Right lobe of liver (tissue), 6 donors: ENCODE measurements at regions of chr6 and their contacts with region 1.

Region 1: GRCh38 chr6:29016559-29017427 is 11.7 kb upstream of the ZNF311 start:
- DNase-seq: peak; percentile 70 to 81 (median 78)
- ATAC-seq: peak; percentile 93 to 98 (median 95)
- H3K4me3 ChIP-seq: peak overlapping the region; percentile 37 to 59 (median 42)
- H3K27ac ChIP-seq: no peak overlapping the region
- H3K4me1 ChIP-seq: peaks cover 0 to 9% (median 0%) of the 10 kb centered on the region in 4 donors
- H3K27me3 ChIP-seq: no peaks in the 10 kb centered on the region
- CTCF ChIP-seq: peak; percentile 65 to 75 (median 68)
- POLR2A ChIP-seq: no peak

Region 2: GRCh38 chr6:28225056-28225834 is 791.5 kb before region 1 on chr6 and contains the start of gene ZSCAN9:
- intact Hi-C with region 1: no loop called
- DNase-seq: peak; percentile 79 to 83 (median 83)
- ATAC-seq: peak; percentile 93 to 97 (median 96)
- H3K4me3 ChIP-seq: peak within 1 kb of the TSS; percentile 69 to 84 (median 76)
- H3K27ac ChIP-seq: peak within 1 kb of the TSS in 1 of 3 donors; percentile 13
- H3K4me1 ChIP-seq: peaks cover 0 to 8% (median 3%) of the 10 kb centered on the region in 4 donors
- H3K27me3 ChIP-seq: no peaks in the 10 kb centered on the region
- CTCF ChIP-seq: no peak
- POLR2A ChIP-seq: peak; percentile 41
- total RNA-seq, gene ZSCAN9: 2.0 to 3.9 (median 3.3) TPM

Region 3: DNA sequence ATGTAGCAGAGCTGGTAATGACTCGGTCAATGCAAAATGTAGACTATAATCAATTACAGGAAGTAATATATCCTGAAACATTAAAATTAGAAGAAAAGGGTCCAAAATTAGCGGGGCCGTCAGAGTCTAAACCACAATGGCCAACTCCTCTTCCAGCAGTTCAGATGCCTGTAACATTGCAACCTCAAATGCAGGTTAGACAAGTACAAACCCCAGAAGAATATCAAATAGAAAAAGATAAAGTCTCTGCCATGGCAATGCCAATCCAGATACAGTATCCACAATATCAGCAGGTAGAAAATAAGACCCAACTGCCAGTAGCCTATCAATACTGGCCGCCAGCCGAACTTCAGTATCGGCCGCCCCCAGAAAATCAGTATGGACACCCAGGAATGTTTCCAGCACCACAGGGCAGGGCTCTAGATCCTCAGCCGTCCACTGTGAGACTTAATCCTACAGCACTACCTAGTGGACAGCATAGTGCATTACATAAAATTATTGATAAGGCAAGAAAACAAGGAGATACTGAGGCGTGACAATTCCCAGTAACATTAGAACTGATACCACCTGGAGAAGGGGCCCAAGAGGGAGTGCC is 332.8 kb before region 1 on chr6:
- intact Hi-C with region 1: loop called in 1 of 2 experiments (anchors 5 kb)
- DNase-seq: no peak
- ATAC-seq: peak; percentile 80 to 93 (median 89)
- H3K4me3 ChIP-seq: no peak overlapping the region
- H3K27ac ChIP-seq: no peak overlapping the region
- H3K4me1 ChIP-seq: no peaks in the 10 kb centered on the region
- H3K27me3 ChIP-seq: no peaks in the 10 kb centered on the region
- CTCF ChIP-seq: peak; percentile 57 to 67 (median 65)
- POLR2A ChIP-seq: no peak

Region 4: DNA sequence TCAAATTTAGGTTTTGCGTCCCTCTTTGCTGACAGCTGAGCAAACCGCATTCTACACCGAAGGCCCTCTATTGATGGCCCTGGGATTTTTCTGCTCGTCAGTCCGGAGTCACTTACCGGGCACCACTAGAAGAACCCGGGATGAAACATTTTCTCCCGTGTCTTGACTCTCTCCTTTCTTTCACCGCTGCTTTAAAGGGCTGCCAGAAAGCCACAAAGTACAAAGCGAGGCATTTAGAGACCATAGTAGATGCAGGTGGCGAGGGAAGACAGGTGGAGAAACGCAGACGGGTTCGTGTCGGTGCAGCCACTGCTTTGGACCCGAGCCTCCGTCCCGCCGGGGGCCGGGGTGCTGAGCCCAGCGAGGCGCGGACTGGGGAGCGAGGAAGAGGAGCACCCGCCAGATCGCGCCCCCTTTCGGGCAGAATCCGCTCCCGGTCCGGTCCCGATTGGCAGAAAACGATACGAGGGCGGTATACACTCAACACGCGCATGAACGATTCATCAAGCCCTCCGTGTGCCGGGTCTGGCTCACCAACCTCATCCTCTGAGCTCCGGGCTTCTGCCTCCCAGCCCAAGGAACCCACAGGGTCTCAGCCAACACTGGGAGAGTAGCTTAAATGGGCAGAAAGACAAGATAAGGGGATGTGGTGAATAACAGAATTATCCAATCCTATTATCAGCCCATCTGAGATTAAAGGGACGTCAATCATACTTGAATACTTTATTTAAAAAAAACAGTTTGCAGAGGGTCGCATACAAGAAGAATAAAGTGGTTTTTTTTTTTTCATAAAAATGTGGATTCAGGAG is 178.0 kb before region 1 on chr6:
- intact Hi-C with region 1: loop called (anchors 10 kb)
- DNase-seq: peak; percentile 86 to 90 (median 87)
- ATAC-seq: peak; percentile 87 to 94 (median 90)
- H3K4me3 ChIP-seq: peak overlapping the region; percentile 61 to 74 (median 69)
- H3K27ac ChIP-seq: peak overlapping the region; percentile 31 to 73 (median 41)
- H3K4me1 ChIP-seq: peaks cover 0 to 6% (median 3%) of the 10 kb centered on the region in 4 donors
- H3K27me3 ChIP-seq: peaks cover 0 to 6% of the 10 kb centered on the region in 2 donors
- CTCF ChIP-seq: peak; percentile 49 to 63 (median 58)
- POLR2A ChIP-seq: no peak